Colonic mucosa (tissue), 4 donors: ENCODE measurements at regions of chr4 and their contacts with region 1.

Region 1: DNA sequence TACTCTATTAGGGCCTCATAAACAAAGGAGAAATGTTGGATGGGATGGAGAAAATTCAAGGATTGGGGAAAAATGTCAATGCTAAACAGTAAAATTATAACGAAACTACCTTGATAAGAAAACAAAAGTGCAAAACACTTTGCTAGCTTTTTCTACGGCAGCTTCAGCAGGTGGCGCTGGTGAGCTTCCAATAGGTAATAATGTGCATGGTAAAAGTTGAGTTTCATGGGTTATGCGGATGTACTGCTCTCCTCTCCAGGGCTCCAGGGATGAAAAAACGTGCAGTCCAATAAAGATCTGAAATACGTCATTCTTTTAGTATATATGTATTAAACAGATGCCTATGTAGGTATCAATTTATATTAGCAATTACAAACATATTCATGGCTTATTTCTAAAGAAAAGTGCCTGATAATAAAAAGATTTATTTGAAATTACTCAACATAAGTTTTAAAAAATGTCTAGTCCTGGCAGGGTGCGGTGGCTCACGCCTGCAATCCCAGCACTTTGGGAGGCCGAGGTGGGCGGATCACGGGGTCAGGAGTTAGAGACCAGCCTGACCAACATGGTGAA is 239.6 kb downstream of the GRXCR1 start:
- DNase-seq: peak; percentile 35
- H3K4me3 ChIP-seq: no peak overlapping the region
- H3K27ac ChIP-seq: no peak overlapping the region
- H3K4me1 ChIP-seq: no peaks in the 10 kb centered on the region
- H3K27me3 ChIP-seq: no peaks in the 10 kb centered on the region
- CTCF ChIP-seq: peak; percentile 50

Region 2: GRCh38 chr4:44629280-44629866 is 1497.3 kb after region 1 on chr4:
- intact Hi-C with region 1: loop called (anchors 5 kb)
- DNase-seq: peak; percentile 22
- H3K4me3 ChIP-seq: no peak overlapping the region
- H3K27ac ChIP-seq: no peak overlapping the region
- H3K4me1 ChIP-seq: no peaks in the 10 kb centered on the region
- H3K27me3 ChIP-seq: no peaks in the 10 kb centered on the region
- CTCF ChIP-seq: peak; percentile 64